Activated CD4-positive, alpha-beta memory T cell treated with anti-CD3 and anti-CD28 coated beads for 36 hours (primary cell): ENCODE measurements at regions of chr1 and their contacts with region 1.

Region 1: DNA sequence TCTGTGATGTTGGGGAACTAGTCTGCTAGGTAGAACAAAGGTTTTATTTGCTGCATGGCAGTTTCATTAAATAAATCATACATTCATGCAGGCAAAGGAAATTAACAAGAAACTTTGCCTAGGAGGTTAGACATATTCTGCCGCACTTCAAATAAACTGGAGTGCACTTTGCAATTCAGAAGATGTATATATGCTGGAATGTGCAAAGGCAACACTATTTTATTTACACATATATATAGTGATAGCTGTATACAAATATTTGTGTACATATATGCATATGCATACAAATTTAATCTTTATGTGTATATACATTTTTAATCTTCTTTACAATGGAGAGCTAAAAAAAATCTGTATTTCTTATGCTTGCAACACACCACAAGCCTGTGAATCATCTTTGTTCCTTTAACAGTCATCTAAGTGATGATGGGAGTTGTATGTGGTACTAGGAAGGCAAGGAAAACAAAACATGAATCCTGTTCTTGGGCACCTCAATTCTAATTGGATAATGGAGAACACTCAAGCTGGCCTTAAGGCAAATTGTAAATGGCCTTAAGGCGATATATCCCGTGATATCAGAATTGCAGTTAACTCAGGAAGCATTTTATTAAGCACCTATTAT is 605.8 kb upstream of the CAMK1G start:
- DNase-seq: no peak
- H3K4me3 Mint-ChIP-seq: no peak overlapping the region
- H3K27ac Mint-ChIP-seq: no peak overlapping the region
- H3K4me1 Mint-ChIP-seq: no peaks in the 10 kb centered on the region
- H3K27me3 Mint-ChIP-seq: peaks cover 1% of the 10 kb centered on the region

Region 2: GRCh38 chr1:208997726-208998312 is 20.1 kb after region 1 on chr1:
- CTCF ChIA-PET with region 1: no interaction called
- POLR2A ChIA-PET with region 1: no interaction called
- intact Hi-C with region 1: no loop called
- DNase-seq: no peak
- H3K4me3 Mint-ChIP-seq: no peak overlapping the region
- H3K27ac Mint-ChIP-seq: no peak overlapping the region
- H3K4me1 Mint-ChIP-seq: no peaks in the 10 kb centered on the region
- H3K27me3 Mint-ChIP-seq: no peaks in the 10 kb centered on the region

Region 3: DNA sequence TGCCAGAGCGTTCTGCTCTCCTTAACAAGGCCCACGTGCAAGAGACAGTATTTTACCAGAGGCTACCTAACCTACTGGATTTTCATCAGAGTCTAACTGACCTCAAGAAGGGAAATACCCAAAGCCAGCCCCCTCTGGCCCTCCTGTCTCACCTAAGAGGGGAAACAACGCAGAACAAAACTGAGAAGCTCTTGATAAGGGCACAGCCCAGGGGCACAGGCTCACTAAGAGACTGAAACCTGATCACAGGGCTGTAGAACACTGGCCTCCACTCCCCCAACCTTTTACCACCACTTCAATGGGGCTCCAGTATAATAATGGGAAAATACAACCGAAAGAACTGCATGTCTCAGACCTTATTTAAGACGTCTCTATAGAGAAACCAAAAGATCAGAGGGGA is 156.3 kb after region 1 on chr1:
- CTCF ChIA-PET with region 1: no interaction called
- POLR2A ChIA-PET with region 1: no interaction called
- intact Hi-C with region 1: no loop called
- DNase-seq: no peak
- H3K4me3 Mint-ChIP-seq: no peak overlapping the region
- H3K27ac Mint-ChIP-seq: no peak overlapping the region
- H3K4me1 Mint-ChIP-seq: no peaks in the 10 kb centered on the region
- H3K27me3 Mint-ChIP-seq: peaks cover 2% of the 10 kb centered on the region

Region 4: DNA sequence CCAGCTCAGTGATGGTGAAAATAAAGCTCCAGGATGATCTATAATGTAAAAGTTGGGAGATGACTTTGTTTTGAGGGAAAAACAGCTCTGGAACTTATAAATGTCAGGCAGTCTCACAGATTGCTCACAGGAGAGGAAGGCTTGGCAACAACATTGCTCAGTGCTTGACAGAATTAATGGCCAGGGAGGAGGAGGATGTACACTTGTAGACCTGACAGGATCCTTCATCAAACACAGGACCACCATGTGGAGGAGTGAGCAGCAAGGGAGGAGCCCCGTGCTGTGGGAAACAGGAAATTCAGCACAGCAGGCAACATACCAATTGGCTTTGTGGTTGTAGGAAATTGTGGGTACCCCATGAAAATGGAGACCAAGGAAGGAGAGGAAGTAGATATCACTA is 314.0 kb after region 1 on chr1:
- CTCF ChIA-PET with region 1: no interaction called
- POLR2A ChIA-PET with region 1: no interaction called
- intact Hi-C with region 1: loop called (anchors 5 kb)
- DNase-seq: no peak
- H3K4me3 Mint-ChIP-seq: no peak overlapping the region
- H3K27ac Mint-ChIP-seq: no peak overlapping the region
- H3K4me1 Mint-ChIP-seq: no peaks in the 10 kb centered on the region
- H3K27me3 Mint-ChIP-seq: peaks cover 3% of the 10 kb centered on the region